Thyroid gland (tissue), 4 donors: ENCODE measurements at regions of chr3 and their contacts with region 1.

Region 1: DNA sequence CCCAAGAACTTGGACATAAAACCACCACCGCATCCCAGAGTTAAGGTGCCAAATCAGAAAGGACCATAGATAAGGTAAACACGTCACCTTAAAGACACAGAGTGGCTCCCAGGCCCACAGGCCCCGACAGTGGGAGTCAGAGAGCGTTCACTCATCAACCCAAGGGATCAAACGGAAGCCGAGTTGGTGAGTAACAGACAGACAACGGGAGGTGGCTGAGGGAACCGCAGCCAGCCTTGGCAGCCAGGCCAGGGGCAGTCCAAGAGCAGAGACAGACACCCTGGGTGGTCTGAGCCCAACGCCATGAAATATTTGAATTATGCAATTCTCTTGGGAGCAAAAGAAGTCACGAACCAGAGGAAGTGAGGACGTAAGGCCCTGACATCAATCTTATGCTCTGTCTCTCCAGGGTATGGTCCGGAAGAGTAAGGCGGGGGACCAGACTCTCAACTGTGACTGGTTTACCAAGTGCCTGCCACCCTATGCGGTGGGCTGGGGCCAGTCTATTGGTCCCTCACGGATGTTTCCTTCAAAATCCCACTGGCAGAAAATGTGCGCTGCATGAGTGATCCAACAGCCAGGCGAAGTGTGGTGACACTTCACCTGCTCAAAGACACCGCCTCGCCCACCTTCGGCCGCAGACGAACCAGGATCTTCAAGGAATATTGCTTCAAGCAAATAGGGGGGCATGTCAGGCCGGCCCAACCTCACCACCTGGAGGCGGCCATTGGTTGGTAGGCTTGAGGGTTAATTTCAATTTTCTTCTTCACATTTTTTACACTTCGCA is 34.3 kb downstream of the TMEM44 start:
- DNase-seq: no peak
- H3K4me3 ChIP-seq: no peak overlapping the region
- H3K27ac ChIP-seq: no peak overlapping the region
- H3K4me1 ChIP-seq: no peaks in the 10 kb centered on the region
- H3K27me3 ChIP-seq: no peaks in the 10 kb centered on the region
- CTCF ChIP-seq: no peak
- POLR2A ChIP-seq: no peak

Region 2: DNA sequence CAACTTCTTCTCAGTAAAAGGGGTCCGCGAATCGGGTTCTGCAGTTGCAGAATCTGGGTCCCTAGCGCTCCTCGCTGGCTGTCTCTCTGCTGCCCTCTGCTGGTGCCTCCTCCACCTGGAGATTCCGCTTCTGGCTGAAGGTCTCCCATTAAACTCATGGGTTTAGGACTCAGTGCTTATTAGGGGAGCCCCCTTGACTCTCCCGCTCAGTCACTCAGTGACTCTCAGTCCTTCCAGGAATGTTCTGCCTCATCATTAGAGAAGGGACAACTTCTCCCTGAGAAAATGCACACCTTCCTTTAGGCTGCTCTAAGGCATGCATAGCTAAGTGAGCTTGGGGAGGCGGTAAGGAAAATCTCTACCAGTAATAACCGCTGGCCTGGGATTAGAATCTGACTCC is 255.0 kb before region 1 on chr3:
- intact Hi-C with region 1: loop called (anchors 5 kb)
- DNase-seq: peak; percentile 75 to 83
- H3K4me3 ChIP-seq: no peak overlapping the region
- H3K27ac ChIP-seq: no peak overlapping the region
- H3K4me1 ChIP-seq: peaks cover 0 to 4% of the 10 kb centered on the region in 2 donors
- H3K27me3 ChIP-seq: no peaks in the 10 kb centered on the region
- CTCF ChIP-seq: peak; percentile 66 to 95 (median 84)
- POLR2A ChIP-seq: no peak

Region 3: GRCh38 chr3:194381460-194381875 is 217.5 kb before region 1 on chr3:
- intact Hi-C with region 1: no loop called
- DNase-seq: peak; percentile 39 to 47
- H3K4me3 ChIP-seq: no peak overlapping the region
- H3K27ac ChIP-seq: peak overlapping the region in 1 of 3 donors; percentile 49
- H3K4me1 ChIP-seq: peaks cover 4 to 9% of the 10 kb centered on the region in 2 donors
- H3K27me3 ChIP-seq: no peaks in the 10 kb centered on the region
- CTCF ChIP-seq: no peak
- POLR2A ChIP-seq: peak in 1 of 2 donors; percentile 19

Region 4: GRCh38 chr3:194472290-194472920 is 126.6 kb before region 1 on chr3:
- intact Hi-C with region 1: loop called (anchors 5 kb)
- DNase-seq: no peak
- H3K4me3 ChIP-seq: no peak overlapping the region
- H3K27ac ChIP-seq: no peak overlapping the region
- H3K4me1 ChIP-seq: peaks cover 5 to 20% of the 10 kb centered on the region in 2 donors
- H3K27me3 ChIP-seq: no peaks in the 10 kb centered on the region
- CTCF ChIP-seq: peak; percentile 84 to 98 (median 94)
- POLR2A ChIP-seq: no peak